ENCODE measurements at regions of chr15 and their contacts with region 1.

Region 1: GRCh38 chr15:70615435-70616310 is 147.7 kb downstream of the UACA start:
- DNase-seq: no peak

Region 2: GRCh38 chr15:70528270-70528706 is 87.4 kb before region 1 on chr15:
- intact Hi-C with region 1: no loop called
- DNase-seq: no peak

Region 3: GRCh38 chr15:70580958-70581357 is 34.7 kb before region 1 on chr15:
- intact Hi-C with region 1: loop called in 1 of 2 experiments (anchors 1 kb)
- DNase-seq: no peak

Region 4: DNA sequence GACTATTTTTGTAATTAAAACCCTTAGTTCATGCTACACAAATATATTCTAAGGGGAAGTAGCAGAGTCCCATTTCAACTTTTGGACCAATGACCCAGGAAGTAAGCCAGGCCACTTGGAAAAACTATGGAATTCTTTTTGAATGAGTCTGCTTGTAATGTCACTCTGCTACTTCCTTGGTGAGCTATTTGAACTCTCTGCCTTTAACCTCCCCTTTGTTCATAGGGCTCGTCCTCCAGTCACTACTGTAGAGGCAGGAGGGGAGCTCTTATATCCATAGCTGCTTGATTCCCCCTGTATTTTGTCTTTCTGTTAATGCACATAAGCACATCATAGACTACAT is 28.1 kb after region 1 on chr15:
- intact Hi-C with region 1: no loop called
- DNase-seq: no peak

Measured in posterior vena cava (tissue), 2 donors.